WTC11 (cell line): ENCODE measurements at regions of chr1 and their contacts with region 1.

Region 1: DNA sequence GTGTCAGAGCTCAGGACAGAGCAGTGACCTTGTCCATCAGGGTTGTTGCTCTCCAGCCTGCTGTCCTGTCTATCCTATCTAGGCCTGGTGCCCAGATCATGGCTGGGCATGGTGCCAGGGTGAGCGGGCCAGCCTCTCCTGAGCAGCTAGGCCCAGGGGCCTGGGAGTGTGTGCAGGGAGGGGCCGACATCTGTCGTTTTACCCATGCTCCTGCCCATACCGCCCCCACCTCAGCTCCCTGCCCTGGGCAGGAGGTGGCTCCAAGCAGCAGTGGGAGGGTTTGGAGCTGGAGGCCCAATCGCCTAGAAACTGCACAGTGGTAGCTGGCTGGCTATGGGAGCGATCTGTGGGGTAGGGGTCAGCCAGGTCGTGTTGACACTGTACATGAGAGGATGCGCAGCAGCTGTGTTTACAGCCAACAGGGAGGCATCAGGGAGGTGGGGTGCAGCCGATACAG is 6.5 kb downstream of the INSRR start:
- DNase-seq: no peak
- ATAC-seq: no peak
- H3K4me3 Mint-ChIP-seq: no peak overlapping the region
- H3K27ac Mint-ChIP-seq: no peak overlapping the region
- H3K4me1 Mint-ChIP-seq: peaks cover 10% of the 10 kb centered on the region
- H3K27me3 Mint-ChIP-seq: peaks cover 89% of the 10 kb centered on the region
- CTCF ChIP-seq: no peak

Region 2: GRCh38 chr1:156813750-156814570 is 38.5 kb before region 1 on chr1:
- CTCF ChIA-PET with region 1: interaction called, 12 read pairs
- POLR2A ChIA-PET with region 1: interaction called, 3 read pairs
- DNase-seq: peak; percentile 87
- ATAC-seq: peak; percentile 88
- H3K4me3 Mint-ChIP-seq: peak overlapping the region; percentile 62
- H3K27ac Mint-ChIP-seq: no peak overlapping the region
- H3K4me1 Mint-ChIP-seq: peaks cover 22% of the 10 kb centered on the region
- H3K27me3 Mint-ChIP-seq: peaks cover 59% of the 10 kb centered on the region
- CTCF ChIP-seq: no peak

Region 3: DNA sequence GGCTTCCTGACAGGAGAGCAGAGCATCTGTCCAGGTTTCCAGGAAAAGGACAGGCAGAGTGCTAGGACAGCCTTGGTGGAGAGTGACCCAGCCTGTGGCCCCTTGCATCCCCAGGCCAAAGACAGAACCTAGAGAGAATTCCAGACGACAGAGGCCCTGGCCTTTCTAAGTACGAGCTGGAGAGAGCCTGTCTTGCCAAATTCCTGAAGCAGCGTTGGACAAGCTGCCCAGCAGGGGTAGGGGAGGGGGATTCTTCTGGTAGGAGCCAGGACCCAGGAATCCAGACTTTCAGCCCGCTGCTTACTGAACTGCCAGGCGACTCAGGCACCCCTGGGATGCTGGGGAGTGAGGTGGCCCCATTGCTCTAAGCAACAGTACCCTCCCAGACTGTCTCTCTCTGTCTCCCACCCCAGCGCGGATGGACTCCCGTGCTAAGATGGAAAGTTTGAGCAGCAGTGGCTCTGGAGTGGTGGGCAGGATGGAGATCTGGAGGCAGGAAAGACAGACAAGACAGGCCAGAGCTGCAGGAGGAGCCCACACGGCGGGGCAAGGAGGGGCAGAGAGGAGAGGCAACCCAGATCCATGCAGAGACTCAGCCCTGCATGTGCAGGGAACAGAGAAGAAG is 32.2 kb after region 1 on chr1:
- CTCF ChIA-PET with region 1: interaction called, 211 read pairs
- POLR2A ChIA-PET with region 1: interaction called, 3 read pairs
- DNase-seq: no peak
- ATAC-seq: no peak; the same call in 1 of the 2 replicates
- H3K4me3 Mint-ChIP-seq: no peak overlapping the region
- H3K27ac Mint-ChIP-seq: no peak overlapping the region
- H3K4me1 Mint-ChIP-seq: peaks cover 30% of the 10 kb centered on the region
- H3K27me3 Mint-ChIP-seq: peaks cover 35% of the 10 kb centered on the region
- CTCF ChIP-seq: no peak

Region 4: DNA sequence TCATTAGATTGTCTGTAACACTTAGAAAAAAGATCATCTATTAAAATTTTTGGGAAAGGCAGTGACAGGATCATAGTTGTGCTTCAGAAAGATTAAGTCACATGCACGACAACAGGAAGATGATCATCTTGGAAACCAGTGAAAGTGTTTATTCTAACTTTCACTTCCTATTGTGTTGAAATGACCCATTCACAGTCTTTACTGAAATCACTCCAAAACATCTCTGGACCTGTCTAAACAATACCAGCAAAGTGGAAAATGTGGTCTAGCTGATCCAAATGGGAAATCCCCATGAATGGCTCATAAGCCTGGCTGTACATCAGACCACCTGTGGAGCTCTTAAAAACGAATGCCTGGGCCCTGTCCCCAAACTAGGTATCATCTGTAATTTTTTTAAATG is 396.9 kb after region 1 on chr1:
- CTCF ChIA-PET with region 1: no interaction called
- POLR2A ChIA-PET with region 1: no interaction called
- DNase-seq: no peak
- ATAC-seq: no peak
- H3K4me3 Mint-ChIP-seq: no peak overlapping the region
- H3K27ac Mint-ChIP-seq: no peak overlapping the region
- H3K4me1 Mint-ChIP-seq: no peaks in the 10 kb centered on the region
- H3K27me3 Mint-ChIP-seq: peaks cover 15% of the 10 kb centered on the region
- CTCF ChIP-seq: no peak

Region 5: GRCh38 chr1:157312082-157312812 is 459.8 kb after region 1 on chr1:
- CTCF ChIA-PET with region 1: no interaction called
- POLR2A ChIA-PET with region 1: no interaction called
- DNase-seq: no peak
- ATAC-seq: no peak
- H3K4me3 Mint-ChIP-seq: no peak overlapping the region
- H3K27ac Mint-ChIP-seq: no peak overlapping the region
- H3K4me1 Mint-ChIP-seq: peaks cover 28% of the 10 kb centered on the region
- H3K27me3 Mint-ChIP-seq: peaks cover 3% of the 10 kb centered on the region
- CTCF ChIP-seq: no peak